ENCODE measurements at regions of chr3 and their contacts with region 1.

Region 1: DNA sequence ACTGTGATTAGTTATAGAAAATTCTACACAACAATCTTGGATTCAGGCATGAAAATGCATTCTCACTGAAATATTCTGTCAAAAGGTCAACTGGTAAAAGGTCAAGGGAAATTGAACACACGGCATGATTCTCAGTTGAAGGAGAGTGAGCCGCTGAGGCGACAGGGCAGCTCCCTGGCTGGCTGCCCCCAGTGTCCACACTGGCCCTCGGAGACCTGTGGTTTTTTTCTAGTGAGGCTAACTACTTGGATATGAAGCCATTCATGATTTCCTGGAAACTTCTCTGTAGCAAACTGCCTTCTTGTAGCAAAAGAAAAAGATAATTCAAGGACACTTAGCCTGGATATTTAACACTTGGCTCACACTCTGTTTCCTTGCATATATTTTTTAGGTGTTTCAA is 37.2 kb downstream of the AADACL2 start:
- DNase-seq: peak in 1 of 2 experiments; percentile 21
- H3K4me3 ChIP-seq: no peak overlapping the region
- H3K4me3 Mint-ChIP-seq: no peak overlapping the region
- H3K27ac Mint-ChIP-seq: no peak overlapping the region
- H3K4me1 ChIP-seq: peaks cover 30% of the 10 kb centered on the region
- H3K4me1 Mint-ChIP-seq: peaks cover 36% of the 10 kb centered on the region
- H3K27me3 ChIP-seq: no peaks in the 10 kb centered on the region
- H3K27me3 Mint-ChIP-seq: no peaks in the 10 kb centered on the region
- CTCF ChIP-seq: no peak

Region 2: GRCh38 chr3:151697496-151697895 is 73.5 kb before region 1 on chr3:
- CTCF ChIA-PET with region 1: no interaction called
- POLR2A ChIA-PET with region 1: no interaction called
- intact Hi-C with region 1: no loop called
- DNase-seq: peak in 1 of 2 experiments; percentile 28
- H3K4me3 ChIP-seq: no peak overlapping the region
- H3K4me3 Mint-ChIP-seq: no peak overlapping the region
- H3K27ac Mint-ChIP-seq: no peak overlapping the region
- H3K4me1 ChIP-seq: no peaks in the 10 kb centered on the region
- H3K4me1 Mint-ChIP-seq: peaks cover 7% of the 10 kb centered on the region
- H3K27me3 ChIP-seq: no peaks in the 10 kb centered on the region
- H3K27me3 Mint-ChIP-seq: no peaks in the 10 kb centered on the region
- CTCF ChIP-seq: no peak

Region 3: GRCh38 chr3:151787626-151788025 is 16.7 kb after region 1 on chr3:
- CTCF ChIA-PET with region 1: no interaction called
- POLR2A ChIA-PET with region 1: interaction called, 3 read pairs
- intact Hi-C with region 1: loop called (anchors 1 kb)
- DNase-seq: no peak
- H3K4me3 ChIP-seq: no peak overlapping the region
- H3K4me3 Mint-ChIP-seq: no peak overlapping the region
- H3K27ac Mint-ChIP-seq: no peak overlapping the region
- H3K4me1 ChIP-seq: peaks cover 41% of the 10 kb centered on the region
- H3K4me1 Mint-ChIP-seq: peaks cover 16% of the 10 kb centered on the region
- H3K27me3 ChIP-seq: no peaks in the 10 kb centered on the region
- H3K27me3 Mint-ChIP-seq: no peaks in the 10 kb centered on the region
- CTCF ChIP-seq: no peak

Region 4: DNA sequence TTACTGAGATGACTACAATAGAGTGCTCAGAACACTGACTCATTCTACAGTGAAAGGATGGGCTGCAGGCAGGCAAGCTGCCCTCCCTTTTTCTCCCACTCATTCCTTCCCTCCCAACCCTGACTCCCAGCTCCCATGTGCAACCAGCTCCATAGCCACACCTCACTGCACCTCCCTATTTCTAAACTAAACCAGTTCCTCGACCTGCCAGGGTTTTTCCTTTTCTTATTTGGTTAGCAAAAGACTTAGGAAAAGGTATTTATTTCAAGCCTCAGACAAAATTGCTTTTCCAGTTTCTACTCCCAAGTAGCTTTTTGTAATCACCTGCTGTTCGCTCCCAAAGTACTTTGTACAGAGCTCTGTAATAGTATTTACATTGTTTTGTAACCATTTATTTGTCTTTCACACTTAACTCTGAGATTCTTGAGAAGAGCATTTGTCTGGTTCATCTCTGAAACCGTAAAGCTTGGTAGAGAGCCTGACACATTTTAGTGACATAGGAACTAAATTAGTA is 45.2 kb after region 1 on chr3:
- CTCF ChIA-PET with region 1: no interaction called
- POLR2A ChIA-PET with region 1: interaction called, 5 read pairs
- intact Hi-C with region 1: loop called (anchors 1 kb)
- DNase-seq: peak; percentile 74 to 82
- H3K4me3 ChIP-seq: no peak overlapping the region
- H3K4me3 Mint-ChIP-seq: peak overlapping the region; percentile 65
- H3K27ac Mint-ChIP-seq: peak overlapping the region; percentile 80
- H3K4me1 ChIP-seq: peaks cover 55% of the 10 kb centered on the region
- H3K4me1 Mint-ChIP-seq: peaks cover 35% of the 10 kb centered on the region
- H3K27me3 ChIP-seq: no peaks in the 10 kb centered on the region
- H3K27me3 Mint-ChIP-seq: no peaks in the 10 kb centered on the region
- CTCF ChIP-seq: no peak

Region 5: GRCh38 chr3:151918253-151919029 is 147.5 kb after region 1 on chr3:
- CTCF ChIA-PET with region 1: no interaction called
- POLR2A ChIA-PET with region 1: no interaction called
- intact Hi-C with region 1: no loop called
- DNase-seq: peak in 1 of 2 experiments; percentile 24
- H3K4me3 ChIP-seq: no peak overlapping the region
- H3K4me3 Mint-ChIP-seq: no peak overlapping the region
- H3K27ac Mint-ChIP-seq: peak overlapping the region; percentile 39
- H3K4me1 ChIP-seq: no peaks in the 10 kb centered on the region
- H3K4me1 Mint-ChIP-seq: peaks cover 6% of the 10 kb centered on the region
- H3K27me3 ChIP-seq: no peaks in the 10 kb centered on the region
- H3K27me3 Mint-ChIP-seq: no peaks in the 10 kb centered on the region
- CTCF ChIP-seq: peak; percentile 48 to 62